ENCODE measurements at regions of chr9 and their contacts with region 1.

Region 1: GRCh38 chr9:96232539-96233241 is 69.3 kb downstream of the HSD17B3 start:
- DNase-seq: peak in 3 of 5 donors; percentile 17 to 50 (median 21)
- H3K4me3 ChIP-seq: no peak overlapping the region
- H3K4me3 Mint-ChIP-seq: no peak overlapping the region
- H3K27ac ChIP-seq: no peak overlapping the region
- H3K27ac Mint-ChIP-seq: no peak overlapping the region
- H3K4me1 ChIP-seq: no peaks in the 10 kb centered on the region
- H3K4me1 Mint-ChIP-seq: no peaks in the 10 kb centered on the region
- H3K27me3 ChIP-seq: no peaks in the 10 kb centered on the region
- H3K27me3 Mint-ChIP-seq: peaks cover 26 to 64% of the 10 kb centered on the region in 2 donors

Region 2: DNA sequence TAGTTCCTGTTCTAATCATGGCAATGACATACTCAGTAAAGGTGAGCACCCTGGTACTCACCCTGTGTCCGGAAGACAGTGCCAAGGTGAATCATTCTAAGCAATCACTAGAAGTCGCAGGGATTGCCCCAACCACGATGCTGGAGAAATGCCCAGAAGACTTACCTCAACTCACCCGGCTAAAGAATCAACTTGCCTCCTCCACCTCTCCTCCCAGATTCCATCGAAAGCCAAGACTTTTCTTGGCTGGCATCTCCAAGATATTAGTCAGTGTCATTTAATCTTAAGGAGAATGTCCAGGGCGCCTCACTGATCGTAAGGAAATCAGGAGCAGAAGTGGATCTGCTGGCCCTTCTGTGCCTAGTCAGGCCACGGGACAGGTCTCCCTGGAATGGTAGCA is 152.3 kb before region 1 on chr9:
- CTCF ChIA-PET with region 1: no interaction called
- POLR2A ChIA-PET with region 1: no interaction called
- DNase-seq: no peak
- H3K4me3 ChIP-seq: no peak overlapping the region
- H3K4me3 Mint-ChIP-seq: no peak overlapping the region
- H3K27ac ChIP-seq: no peak overlapping the region
- H3K27ac Mint-ChIP-seq: no peak overlapping the region
- H3K4me1 ChIP-seq: no peaks in the 10 kb centered on the region
- H3K4me1 Mint-ChIP-seq: no peaks in the 10 kb centered on the region
- H3K27me3 ChIP-seq: no peaks in the 10 kb centered on the region
- H3K27me3 Mint-ChIP-seq: peaks cover 11 to 13% of the 10 kb centered on the region in 2 donors

Region 3: GRCh38 chr9:96217754-96218693 is 14.7 kb before region 1 on chr9:
- CTCF ChIA-PET with region 1: interaction called, 10 read pairs
- POLR2A ChIA-PET with region 1: no interaction called
- DNase-seq: peak; percentile 56 to 73 (median 58)
- H3K4me3 ChIP-seq: peak overlapping the region; percentile 22
- H3K4me3 Mint-ChIP-seq: peak overlapping the region; percentile 38 to 82 (median 77)
- H3K27ac ChIP-seq: no peak overlapping the region
- H3K27ac Mint-ChIP-seq: peak overlapping the region in 3 of 8 donors; percentile 31 to 71 (median 64)
- H3K4me1 ChIP-seq: peaks cover 5% of the 10 kb centered on the region
- H3K4me1 Mint-ChIP-seq: peaks cover 10 to 16% (median 13%) of the 10 kb centered on the region in 3 donors
- H3K27me3 ChIP-seq: peaks cover 7% of the 10 kb centered on the region
- H3K27me3 Mint-ChIP-seq: peaks cover 28 to 59% of the 10 kb centered on the region in 2 donors

Region 4: DNA sequence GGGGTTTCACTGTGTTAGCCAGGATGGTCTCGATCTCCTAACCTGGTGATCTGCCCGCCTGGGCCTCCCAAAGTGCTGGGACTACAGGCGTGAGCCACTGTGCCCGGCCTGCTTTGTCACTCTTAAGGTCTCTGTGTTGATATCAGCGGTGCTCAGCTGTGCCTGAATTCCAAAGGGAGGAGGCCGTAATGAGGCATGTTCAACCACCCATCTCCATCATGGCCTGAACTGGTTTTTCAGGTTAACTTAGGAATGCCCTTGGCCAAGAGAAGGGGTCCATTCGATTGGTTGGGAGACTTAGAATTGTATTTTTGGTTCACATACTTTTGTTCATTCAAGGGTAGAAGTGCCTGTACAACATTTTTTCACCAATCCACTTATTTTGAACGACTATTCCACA is 47.3 kb after region 1 on chr9:
- CTCF ChIA-PET with region 1: no interaction called
- POLR2A ChIA-PET with region 1: no interaction called
- DNase-seq: no peak
- H3K4me3 ChIP-seq: no peak overlapping the region
- H3K4me3 Mint-ChIP-seq: no peak overlapping the region
- H3K27ac ChIP-seq: no peak overlapping the region
- H3K27ac Mint-ChIP-seq: no peak overlapping the region
- H3K4me1 ChIP-seq: no peaks in the 10 kb centered on the region
- H3K4me1 Mint-ChIP-seq: no peaks in the 10 kb centered on the region
- H3K27me3 ChIP-seq: no peaks in the 10 kb centered on the region
- H3K27me3 Mint-ChIP-seq: peaks cover 2 to 4% of the 10 kb centered on the region in 2 donors